Naive thymus-derived CD8-positive, alpha-beta T cell (primary cell): ENCODE measurements at regions of chr4 and their contacts with region 1.

Region 1: GRCh38 chr4:148441986-148442831 is at the start of gene NR3C2:
- DNase-seq: peak; percentile 86 to 100 (median 98)
- ATAC-seq: peak; percentile 76 to 82
- H3K4me3 Mint-ChIP-seq: peak within 1 kb of the TSS; percentile 93 to 100 (median 100)
- H3K27ac Mint-ChIP-seq: peak within 1 kb of the TSS; percentile 95 to 100 (median 99)
- H3K4me1 Mint-ChIP-seq: peaks cover 30 to 56% (median 52%) of the 10 kb centered on the region in 4 donors
- H3K27me3 Mint-ChIP-seq: peaks cover 0 to 15% (median 0%) of the 10 kb centered on the region in 5 donors
- polyA plus RNA-seq, gene NR3C2: 6.8 to 9.4 (median 9.2) TPM

Region 2: DNA sequence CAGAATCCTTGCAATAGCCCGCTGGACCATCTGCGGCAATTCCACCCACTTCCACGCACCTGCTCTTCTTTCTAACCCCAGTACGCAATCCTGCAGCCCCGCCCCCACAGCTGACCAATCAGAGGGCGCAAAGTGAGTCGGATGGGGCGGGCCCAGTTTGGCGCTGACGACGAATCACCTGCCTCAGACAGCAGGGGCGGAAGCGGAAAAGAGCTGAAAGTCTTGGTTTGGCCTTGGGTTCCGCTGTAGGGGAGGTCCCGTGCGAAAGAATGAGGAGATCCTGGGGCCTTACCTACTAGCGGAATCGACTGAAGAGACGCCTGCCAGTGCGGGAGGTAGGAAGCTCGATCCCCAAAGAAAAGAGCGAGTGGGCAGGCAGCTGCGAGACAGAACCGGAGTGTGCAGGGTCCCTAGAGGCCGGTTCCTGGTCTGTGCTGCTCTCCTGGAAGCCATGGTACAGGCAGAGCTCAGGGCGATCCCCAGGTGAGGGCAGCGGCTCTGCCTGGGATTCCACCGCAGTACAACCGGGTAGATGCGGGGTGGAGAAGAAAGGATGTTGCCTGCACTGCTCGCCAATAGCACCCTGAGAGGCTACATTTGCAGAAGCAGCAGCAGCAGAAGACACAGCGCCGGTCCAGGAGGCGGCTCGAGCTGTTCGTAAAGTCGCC is 824.9 kb before region 1 on chr4 and contains the start of gene TMEM184C:
- POLR2A ChIA-PET with region 1: interaction called, 11 read pairs
- DNase-seq: peak; percentile 95 to 99 (median 98)
- ATAC-seq: peak; percentile 93 to 96
- H3K4me3 Mint-ChIP-seq: peak within 1 kb of the TSS; percentile 92 to 99 (median 96)
- H3K27ac Mint-ChIP-seq: peak within 1 kb of the TSS; percentile 95 to 99 (median 98)
- H3K4me1 Mint-ChIP-seq: peaks cover 22 to 52% (median 36%) of the 10 kb centered on the region in 4 donors
- H3K27me3 Mint-ChIP-seq: peaks cover 0 to 10% (median 0%) of the 10 kb centered on the region in 5 donors
- polyA plus RNA-seq, gene TMEM184C: 12.6 to 27.9 (median 16.6) TPM

Region 3: DNA sequence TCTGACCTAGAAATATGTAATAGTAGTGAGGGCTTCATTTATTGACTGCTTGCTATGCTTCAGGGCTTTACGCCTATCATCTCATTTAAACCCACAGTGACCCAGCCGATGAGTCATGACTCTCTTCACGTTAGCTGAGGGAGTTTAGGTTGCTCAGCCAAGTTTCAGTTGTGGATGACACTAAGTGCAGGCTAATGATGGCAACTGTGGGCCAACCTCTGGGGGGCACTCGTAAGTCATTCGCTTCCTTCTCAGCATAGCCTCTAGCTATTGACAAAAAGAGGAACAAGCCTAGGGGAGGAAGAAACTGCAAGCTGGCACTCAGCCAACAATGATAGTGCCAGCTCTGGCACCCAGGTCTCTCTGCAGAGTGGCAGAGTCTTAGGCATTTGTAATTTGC is 385.3 kb before region 1 on chr4:
- POLR2A ChIA-PET with region 1: interaction called, 304 read pairs
- DNase-seq: peak; percentile 12 to 84 (median 58)
- ATAC-seq: peak; percentile 29 to 36
- H3K4me3 Mint-ChIP-seq: peak overlapping the region in 9 of 10 donors; percentile 13 to 91 (median 66)
- H3K27ac Mint-ChIP-seq: peak overlapping the region; percentile 88 to 100 (median 96)
- H3K4me1 Mint-ChIP-seq: peaks cover 51 to 97% (median 95%) of the 10 kb centered on the region in 4 donors
- H3K27me3 Mint-ChIP-seq: no peaks in the 10 kb centered on the region

Region 4: GRCh38 chr4:148170408-148171365 is 271.5 kb before region 1 on chr4:
- POLR2A ChIA-PET with region 1: interaction called, 10 read pairs
- DNase-seq: peak in 2 of 10 donors; percentile 8 to 16
- ATAC-seq: peak; percentile 66 to 89
- H3K4me3 Mint-ChIP-seq: peak overlapping the region in 3 of 10 donors; percentile 7 to 46 (median 26)
- H3K27ac Mint-ChIP-seq: peak overlapping the region in 5 of 10 donors; percentile 6 to 82 (median 18)
- H3K4me1 Mint-ChIP-seq: peaks cover 15 to 46% (median 33%) of the 10 kb centered on the region in 4 donors
- H3K27me3 Mint-ChIP-seq: no peaks in the 10 kb centered on the region

Region 5: GRCh38 chr4:148292686-148293085 is 149.5 kb before region 1 on chr4:
- POLR2A ChIA-PET with region 1: no interaction called
- DNase-seq: no peak
- ATAC-seq: no peak
- H3K4me3 Mint-ChIP-seq: no peak overlapping the region
- H3K27ac Mint-ChIP-seq: no peak overlapping the region
- H3K4me1 Mint-ChIP-seq: peaks cover 17 to 60% (median 53%) of the 10 kb centered on the region in 4 donors
- H3K27me3 Mint-ChIP-seq: no peaks in the 10 kb centered on the region

Region 6: DNA sequence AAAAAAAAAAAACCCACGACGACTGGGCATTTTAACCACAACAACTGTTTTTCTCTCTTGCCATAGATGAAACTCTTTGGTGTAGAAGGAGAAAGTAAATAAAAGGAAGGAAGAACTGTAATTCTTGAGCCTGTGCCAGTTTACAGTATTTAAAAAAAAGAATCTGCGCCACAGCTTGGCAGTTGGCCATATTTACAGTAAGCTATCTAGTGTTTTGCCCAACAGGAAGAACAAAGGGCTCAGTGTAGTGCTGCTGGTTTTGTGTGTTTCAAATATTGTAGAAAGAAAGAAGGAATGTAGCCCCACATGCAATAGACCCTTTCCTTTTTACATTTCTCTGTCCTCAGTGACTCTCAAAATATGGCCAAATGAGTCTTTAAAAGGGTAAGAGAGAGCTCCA is 66.1 kb before region 1 on chr4:
- POLR2A ChIA-PET with region 1: interaction called, 103 read pairs
- DNase-seq: peak; percentile 33 to 85 (median 67)
- ATAC-seq: peak; percentile 89 to 90
- H3K4me3 Mint-ChIP-seq: peak overlapping the region; percentile 73 to 87 (median 81)
- H3K27ac Mint-ChIP-seq: peak overlapping the region; percentile 86 to 98 (median 94)
- H3K4me1 Mint-ChIP-seq: peaks cover 25 to 52% (median 49%) of the 10 kb centered on the region in 4 donors
- H3K27me3 Mint-ChIP-seq: no peaks in the 10 kb centered on the region

Region 7: DNA sequence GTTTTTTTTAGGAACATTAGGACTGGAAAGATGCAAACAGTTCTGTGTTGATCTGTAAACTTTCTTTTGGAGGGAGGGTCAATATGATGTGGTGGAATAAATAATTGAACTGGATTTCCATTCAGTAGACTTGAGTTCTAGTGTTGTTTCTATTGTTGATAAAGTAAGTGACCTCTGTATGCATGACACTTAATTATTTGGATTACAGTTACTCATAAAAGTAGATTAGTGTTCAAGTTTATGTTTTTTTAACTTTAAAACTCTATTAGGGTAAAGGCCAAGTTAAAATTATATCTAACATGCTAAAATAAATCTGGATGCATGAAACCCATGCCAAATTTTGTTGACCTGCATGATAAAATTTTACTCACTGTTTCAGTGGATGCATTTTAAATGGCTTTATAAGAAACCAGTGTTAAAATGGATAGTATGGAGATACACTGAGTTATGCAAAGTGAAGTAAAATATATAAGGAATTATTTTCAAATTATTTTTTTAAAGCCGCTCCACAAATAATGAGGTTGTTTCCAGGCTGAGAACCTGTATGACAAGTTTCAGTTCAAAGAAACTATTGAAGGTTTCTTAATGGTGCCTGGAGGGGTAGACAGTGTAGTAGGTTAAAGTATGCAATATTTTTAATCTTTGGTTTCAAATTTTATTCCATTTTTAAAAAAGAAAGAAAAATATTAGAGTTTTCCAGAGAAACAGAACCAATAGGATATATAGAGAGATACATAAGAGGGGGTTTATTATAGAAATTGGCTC is 85.5 kb after region 1 on chr4:
- POLR2A ChIA-PET with region 1: no interaction called
- DNase-seq: no peak
- ATAC-seq: no peak
- H3K4me3 Mint-ChIP-seq: no peak overlapping the region
- H3K27ac Mint-ChIP-seq: no peak overlapping the region
- H3K4me1 Mint-ChIP-seq: no peaks in the 10 kb centered on the region
- H3K27me3 Mint-ChIP-seq: peaks cover 0 to 3% (median 0%) of the 10 kb centered on the region in 5 donors